T-cell (primary cell): ENCODE measurements at regions of chr11 and their contacts with region 1.

Region 1: DNA sequence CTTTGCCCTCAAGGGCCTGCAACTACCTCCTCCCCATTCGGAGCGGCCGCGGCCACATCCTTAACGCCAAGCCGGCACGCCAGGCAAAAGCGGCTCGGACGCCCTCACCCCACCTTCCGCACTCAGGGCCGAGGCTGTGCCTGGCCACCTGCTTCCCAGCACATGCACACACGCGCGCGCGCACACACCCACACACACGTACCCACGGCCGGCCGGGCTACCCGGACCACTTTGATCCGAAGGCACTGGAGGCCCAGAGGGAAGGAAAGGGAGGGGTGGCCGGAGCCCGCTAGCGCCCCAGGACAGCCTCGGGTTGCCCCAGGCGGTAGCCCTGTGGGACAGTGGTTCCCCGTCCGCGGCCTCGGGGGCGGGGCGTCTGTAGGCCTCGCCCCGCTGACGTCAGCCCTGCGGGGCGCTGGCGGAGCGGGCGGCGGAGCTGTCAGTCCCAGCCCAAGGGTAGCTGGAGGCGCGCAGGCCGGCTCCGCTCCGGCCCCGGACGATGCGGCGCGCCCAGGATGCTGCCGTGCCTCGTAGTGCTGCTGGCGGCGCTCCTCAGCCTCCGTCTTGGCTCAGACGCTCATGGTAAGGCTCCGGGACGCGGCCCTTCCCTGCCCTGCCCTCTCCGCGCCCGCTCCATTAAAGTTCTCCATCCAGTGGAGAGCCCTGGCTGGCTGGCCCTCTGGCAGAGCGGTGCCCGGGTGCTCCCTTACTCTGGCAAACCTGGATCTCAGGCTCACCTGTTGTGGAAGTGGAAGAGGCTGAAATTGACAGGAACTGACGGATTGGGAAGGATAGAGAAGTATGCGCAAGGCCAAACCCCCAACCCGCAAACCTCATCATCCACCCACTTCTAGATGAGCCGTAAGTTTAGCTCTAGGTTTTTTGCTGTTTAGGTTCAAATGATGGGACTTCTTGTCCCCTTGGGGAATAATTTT is at the start of gene IL10RA:
- DNase-seq: peak; percentile 51 to 90 (median 73)
- ATAC-seq: peak; percentile 83 to 88 (median 86)
- H3K4me3 ChIP-seq: peak within 1 kb of the TSS; percentile 89 to 96
- H3K4me3 Mint-ChIP-seq: peak within 1 kb of the TSS; percentile 91 to 95 (median 93)
- H3K27ac ChIP-seq: peak within 1 kb of the TSS; percentile 89
- H3K27ac Mint-ChIP-seq: peak within 1 kb of the TSS; percentile 94 to 96
- H3K4me1 ChIP-seq: peaks cover 23 to 66% of the 10 kb centered on the region in 2 experiments
- H3K4me1 Mint-ChIP-seq: peaks cover 75 to 83% (median 76%) of the 10 kb centered on the region in 3 donors
- H3K27me3 ChIP-seq: no peaks in the 10 kb centered on the region
- H3K27me3 Mint-ChIP-seq: no peaks in the 10 kb centered on the region
- total RNA-seq, gene IL10RA: 195 to 450 (median 375) TPM

Region 2: GRCh38 chr11:117900121-117900648 is 86.0 kb before region 1 on chr11:
- CTCF ChIA-PET with region 1: no interaction called
- POLR2A ChIA-PET with region 1: no interaction called
- DNase-seq: peak in 1 of 35 experiments; percentile 15
- ATAC-seq: peak in 1 of 4 experiments; percentile 32
- H3K4me3 ChIP-seq: no peak overlapping the region
- H3K4me3 Mint-ChIP-seq: no peak overlapping the region
- H3K27ac ChIP-seq: no peak overlapping the region
- H3K27ac Mint-ChIP-seq: no peak overlapping the region
- H3K4me1 ChIP-seq: no peaks in the 10 kb centered on the region
- H3K4me1 Mint-ChIP-seq: peaks cover 0 to 8% (median 5%) of the 10 kb centered on the region in 3 donors
- H3K27me3 ChIP-seq: peaks cover 0 to 15% of the 10 kb centered on the region in 2 experiments
- H3K27me3 Mint-ChIP-seq: peaks cover 4 to 6% of the 10 kb centered on the region in 2 donors

Region 3: GRCh38 chr11:117953024-117953671 is 33.1 kb before region 1 on chr11:
- CTCF ChIA-PET with region 1: interaction called, 5 to 52 read pairs
- POLR2A ChIA-PET with region 1: interaction called, 3 to 16 read pairs
- DNase-seq: peak in 17 of 35 experiments; percentile 19 to 72 (median 36)
- ATAC-seq: peak; percentile 26 to 50 (median 40)
- H3K4me3 ChIP-seq: peak overlapping the region in 1 of 2 donors; percentile 39
- H3K4me3 Mint-ChIP-seq: peak overlapping the region; percentile 59 to 78 (median 77)
- H3K27ac ChIP-seq: peak overlapping the region; percentile 85
- H3K27ac Mint-ChIP-seq: peak overlapping the region; percentile 88 to 98
- H3K4me1 ChIP-seq: peaks cover 61 to 70% of the 10 kb centered on the region in 2 experiments
- H3K4me1 Mint-ChIP-seq: peaks cover 83 to 95% (median 90%) of the 10 kb centered on the region in 3 donors
- H3K27me3 ChIP-seq: no peaks in the 10 kb centered on the region
- H3K27me3 Mint-ChIP-seq: no peaks in the 10 kb centered on the region